ENCODE measurements at regions of chr15 and their contacts with region 1.

Region 1: GRCh38 chr15:89442671-89443307 is 53.6 kb downstream of the RHCG start:
- H3K4me3 ChIP-seq: no peak overlapping the region
- H3K27ac ChIP-seq: no peak overlapping the region
- H3K4me1 ChIP-seq: no peaks in the 10 kb centered on the region
- CTCF ChIP-seq: peak; percentile 61; the same call in 1 of the 2 replicates

Region 2: DNA sequence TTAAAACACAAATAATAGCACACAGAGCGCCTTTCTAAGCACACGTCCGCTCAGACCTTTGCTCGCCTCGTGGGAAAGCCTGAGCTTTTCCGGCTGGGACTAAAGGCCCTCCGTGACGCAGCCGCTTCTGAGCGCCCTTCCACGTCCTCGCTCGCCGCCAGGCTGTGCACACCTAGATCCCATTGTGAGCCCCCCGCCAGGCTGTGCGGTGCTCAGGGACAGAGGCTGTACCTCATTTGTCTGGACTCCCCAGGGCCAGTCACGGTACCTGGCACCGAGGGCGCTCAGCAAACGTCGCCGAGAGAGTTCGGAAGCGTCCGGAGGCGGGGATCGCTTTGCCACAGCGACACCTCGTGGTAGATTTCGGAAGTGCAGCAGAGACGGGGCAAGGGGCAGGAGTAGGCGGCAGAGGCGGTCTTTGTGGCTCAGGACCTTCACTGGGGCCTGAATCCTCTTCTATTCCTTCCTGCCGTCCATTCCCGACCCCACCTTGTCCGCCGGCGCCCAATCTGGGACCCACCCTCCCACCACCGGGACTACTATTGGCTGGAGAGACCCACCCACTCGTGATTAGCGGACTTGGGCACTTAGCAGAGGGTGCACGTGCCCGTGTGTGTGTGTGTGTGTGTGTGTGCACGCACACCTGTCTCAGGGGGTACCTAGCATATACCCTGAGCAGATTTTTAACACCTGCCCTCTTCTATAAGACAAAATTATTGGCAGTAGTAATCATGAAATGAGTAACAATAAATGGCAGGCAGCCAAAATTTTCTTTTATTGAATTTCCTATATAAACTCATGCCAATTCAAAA is 12.1 kb before region 1 on chr15:
- CTCF ChIA-PET with region 1: interaction called, 67 read pairs
- POLR2A ChIA-PET with region 1: no interaction called
- H3K4me3 ChIP-seq: peak overlapping the region; percentile 18; the same call in 1 of the 2 replicates
- H3K27ac ChIP-seq: no peak overlapping the region
- H3K4me1 ChIP-seq: no peaks in the 10 kb centered on the region
- CTCF ChIP-seq: peak; percentile 95

Region 3: DNA sequence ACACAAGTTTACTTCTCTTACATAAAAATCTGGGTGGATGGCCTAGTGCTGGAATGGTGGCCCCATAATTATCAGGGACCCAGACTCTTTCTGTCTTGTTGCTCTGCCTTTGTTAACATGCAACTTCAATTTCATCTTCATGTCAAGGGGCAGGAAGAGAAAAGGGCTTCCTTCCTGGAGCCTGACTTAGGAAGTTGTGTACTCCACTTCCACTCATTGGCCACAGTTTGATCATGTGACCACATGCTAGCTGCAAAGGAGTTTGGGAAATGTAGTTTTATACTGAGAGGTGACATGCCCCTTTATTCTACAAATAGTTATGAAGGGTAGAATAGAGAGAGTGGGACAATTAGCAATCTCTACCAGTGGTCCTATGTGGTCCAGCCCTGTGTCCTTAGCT is 14.3 kb after region 1 on chr15:
- CTCF ChIA-PET with region 1: interaction called, 62 read pairs
- POLR2A ChIA-PET with region 1: no interaction called
- H3K4me3 ChIP-seq: no peak overlapping the region
- H3K27ac ChIP-seq: no peak overlapping the region
- H3K4me1 ChIP-seq: peaks cover 6% of the 10 kb centered on the region
- CTCF ChIP-seq: no peak

Region 4: DNA sequence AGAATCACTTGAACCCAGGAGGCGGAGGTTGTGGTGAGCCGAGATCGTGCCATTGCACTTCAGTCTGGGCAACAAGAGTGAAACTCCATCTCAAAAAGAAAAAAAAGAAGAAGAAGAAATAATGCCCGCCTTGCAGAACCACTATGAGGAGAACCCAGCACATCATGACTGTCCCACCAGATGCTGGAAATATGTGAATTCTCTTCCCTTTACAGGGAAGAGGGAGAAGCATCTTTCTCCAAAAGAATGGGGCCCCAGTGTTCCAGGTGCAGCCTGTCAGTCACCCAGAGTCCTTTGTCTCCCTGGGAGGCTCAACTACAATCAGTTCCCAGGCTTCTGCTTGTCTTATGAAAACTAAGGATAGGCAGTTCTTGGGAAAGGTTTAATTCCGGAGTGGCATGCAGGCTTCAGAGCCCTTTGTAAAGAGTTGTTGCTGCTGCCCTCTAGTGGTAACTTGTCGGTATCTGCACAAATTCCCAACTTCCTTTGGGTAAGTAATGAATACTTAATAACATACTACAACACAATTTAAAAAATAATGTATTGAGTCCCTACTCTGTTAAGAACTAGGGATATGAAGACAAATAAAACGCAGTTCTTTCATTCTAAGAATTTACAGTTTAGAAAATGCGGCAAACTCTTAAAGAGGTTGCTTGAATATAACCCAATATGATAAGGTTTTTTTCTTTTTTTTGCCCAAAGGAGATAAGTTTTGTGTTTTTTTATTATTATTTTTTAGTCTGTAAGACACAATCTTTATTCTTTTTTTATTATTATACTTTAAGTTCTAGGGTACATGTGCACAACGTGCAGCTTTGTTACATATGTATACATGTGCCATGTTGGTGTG is 113.8 kb after region 1 on chr15:
- CTCF ChIA-PET with region 1: interaction called, 12 read pairs
- POLR2A ChIA-PET with region 1: no interaction called
- H3K4me3 ChIP-seq: no peak overlapping the region
- H3K27ac ChIP-seq: no peak overlapping the region
- H3K4me1 ChIP-seq: no peaks in the 10 kb centered on the region
- CTCF ChIP-seq: peak; percentile 21; the same call in 1 of the 2 replicates

Measured in HEK293 (cell line).